Breast epithelium (tissue), 4 donors: ENCODE measurements at regions of chr1 and their contacts with region 1.

Region 1: DNA sequence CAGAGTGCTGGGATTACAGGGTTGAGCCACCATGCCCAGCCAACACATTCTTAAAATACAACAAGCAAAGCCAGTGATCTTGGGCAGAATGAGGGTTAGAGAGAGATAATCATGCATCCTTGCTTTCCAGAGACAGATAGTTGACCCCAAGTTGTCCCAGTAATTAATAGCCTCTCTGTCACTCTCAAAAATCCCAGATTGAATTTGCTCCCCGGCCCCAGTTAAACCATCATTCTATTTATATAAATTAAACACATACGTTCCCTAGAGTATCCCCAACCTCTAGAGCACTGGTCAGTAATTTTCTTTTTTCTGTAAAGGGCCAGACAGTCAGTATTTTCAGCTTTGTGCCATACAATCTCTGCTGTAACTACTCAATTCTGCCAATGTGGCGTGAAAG is 16.4 kb upstream of the TARDBP start:
- DNase-seq: no peak
- H3K4me3 ChIP-seq: no peak overlapping the region
- H3K27ac ChIP-seq: no peak overlapping the region
- H3K4me1 ChIP-seq: no peaks in the 10 kb centered on the region
- H3K27me3 ChIP-seq: no peaks in the 10 kb centered on the region
- CTCF ChIP-seq: no peak
- POLR2A ChIP-seq: no peak

Region 2: DNA sequence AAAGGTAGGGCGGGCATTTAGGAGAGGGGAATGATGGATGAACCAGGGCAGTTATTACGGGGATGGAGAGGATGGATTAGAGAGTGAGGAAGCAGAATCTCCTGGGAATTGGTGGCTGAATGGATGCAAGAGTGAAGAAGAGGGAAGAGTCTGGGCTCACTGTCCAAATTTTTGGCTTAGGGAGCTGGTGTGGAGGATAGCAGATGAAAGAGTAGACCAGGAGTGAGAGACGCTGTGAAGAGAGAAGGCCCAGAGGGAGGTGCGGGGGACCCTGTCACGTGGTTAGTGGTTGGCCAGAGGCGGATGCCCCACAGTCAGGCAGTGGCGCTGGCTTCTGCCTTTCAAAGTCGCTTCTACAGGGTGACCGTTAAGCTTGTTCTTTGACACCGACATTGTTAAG is 443.0 kb before region 1 on chr1:
- intact Hi-C with region 1: loop called (anchors 5 kb)
- DNase-seq: no peak
- H3K4me3 ChIP-seq: no peak overlapping the region
- H3K27ac ChIP-seq: no peak overlapping the region
- H3K4me1 ChIP-seq: no peaks in the 10 kb centered on the region
- H3K27me3 ChIP-seq: no peaks in the 10 kb centered on the region
- CTCF ChIP-seq: no peak
- POLR2A ChIP-seq: no peak